ENCODE measurements at regions of chr4 and their contacts with region 1.

Region 1: GRCh38 chr4:77075869-77076799 is at the start of gene CCNI:
- DNase-seq: peak; percentile 94
- H3K4me3 Mint-ChIP-seq: peak within 1 kb of the TSS; percentile 93
- H3K27ac Mint-ChIP-seq: no peak within 1 kb of the TSS
- H3K4me1 Mint-ChIP-seq: peaks cover 26% of the 10 kb centered on the region
- H3K27me3 Mint-ChIP-seq: no peaks in the 10 kb centered on the region
- total RNA-seq, gene CCNI: 259 to 264 TPM

Region 2: DNA sequence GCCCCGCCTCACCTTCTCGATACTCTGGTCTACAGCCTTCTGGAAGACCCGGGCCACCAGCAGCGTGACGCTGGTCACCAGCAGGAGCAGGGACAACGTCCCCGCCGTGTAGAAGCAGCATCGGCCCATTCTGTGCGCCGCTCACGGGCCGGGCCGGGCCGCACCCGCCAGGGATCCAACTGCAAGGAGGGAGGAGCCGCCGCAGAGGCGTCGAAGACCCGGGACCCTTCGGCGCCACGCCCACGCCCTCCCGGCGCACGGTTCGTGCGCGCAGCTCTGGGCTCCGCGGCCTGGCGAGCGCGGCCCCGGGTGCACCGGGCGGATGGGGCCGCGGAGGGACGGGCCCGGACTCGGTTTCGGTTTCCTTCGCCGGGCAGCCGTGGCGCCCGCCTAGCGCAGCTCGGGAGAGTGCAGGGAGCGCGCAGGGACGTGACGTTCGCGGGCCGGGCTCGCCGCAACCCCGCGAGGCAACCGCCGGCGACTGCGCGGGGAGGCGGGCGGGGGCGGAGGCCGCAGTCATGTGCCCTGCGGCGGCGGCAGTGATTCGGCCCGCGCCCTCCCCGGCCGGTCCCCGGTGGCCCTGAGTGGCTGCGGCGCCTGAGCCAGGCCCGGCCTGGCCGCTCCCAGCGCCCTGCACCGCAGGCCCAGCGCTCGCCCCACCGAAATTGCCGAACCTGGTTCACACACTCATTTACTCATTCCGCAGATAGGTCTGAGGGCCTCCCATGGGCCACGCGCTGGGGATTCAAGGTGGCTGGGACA is 862.5 kb before region 1 on chr4 and contains the start of gene SCARB2:
- CTCF ChIA-PET with region 1: no interaction called
- POLR2A ChIA-PET with region 1: no interaction called
- intact Hi-C with region 1: loop called (anchors 5 kb)
- DNase-seq: peak; percentile 75
- H3K4me3 Mint-ChIP-seq: peak within 1 kb of the TSS; percentile 70
- H3K27ac Mint-ChIP-seq: peak within 1 kb of the TSS; percentile 44
- H3K4me1 Mint-ChIP-seq: peaks cover 25% of the 10 kb centered on the region
- H3K27me3 Mint-ChIP-seq: no peaks in the 10 kb centered on the region
- total RNA-seq, gene SCARB2: 7.0 to 8.2 TPM

Region 3: GRCh38 chr4:77025643-77026321 is 50.4 kb before region 1 on chr4:
- CTCF ChIA-PET with region 1: no interaction called
- POLR2A ChIA-PET with region 1: no interaction called
- intact Hi-C with region 1: loop called (anchors 1 kb)
- DNase-seq: no peak
- H3K4me3 Mint-ChIP-seq: no peak overlapping the region
- H3K27ac Mint-ChIP-seq: peak overlapping the region; percentile 62
- H3K4me1 Mint-ChIP-seq: peaks cover 43% of the 10 kb centered on the region
- H3K27me3 Mint-ChIP-seq: no peaks in the 10 kb centered on the region

Region 4: DNA sequence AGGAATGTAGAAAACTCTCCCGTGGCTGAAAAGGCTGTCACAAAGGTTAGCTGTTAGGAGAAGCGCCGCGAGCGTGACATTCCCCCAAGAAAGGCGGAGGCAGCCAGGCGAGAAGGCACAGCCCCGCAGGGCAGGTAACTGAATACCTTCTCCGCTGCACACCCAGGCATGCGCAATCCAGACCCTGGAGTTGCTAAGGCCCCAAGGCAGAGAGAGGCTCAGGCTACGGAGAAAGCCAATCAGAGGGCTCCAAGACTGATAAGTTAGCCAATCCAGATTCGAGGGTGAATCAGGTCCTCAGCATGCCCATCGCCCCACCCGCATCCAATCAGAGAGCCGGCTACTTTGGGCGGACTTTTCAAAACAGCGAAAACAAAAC is 80.4 kb after region 1 on chr4:
- CTCF ChIA-PET with region 1: interaction called, 3 read pairs
- POLR2A ChIA-PET with region 1: interaction called, 4 read pairs
- intact Hi-C with region 1: loop called (anchors 1 kb)
- DNase-seq: peak; percentile 97
- H3K4me3 Mint-ChIP-seq: peak overlapping the region; percentile 95
- H3K27ac Mint-ChIP-seq: peak overlapping the region; percentile 94
- H3K4me1 Mint-ChIP-seq: peaks cover 27% of the 10 kb centered on the region
- H3K27me3 Mint-ChIP-seq: no peaks in the 10 kb centered on the region

Region 5: DNA sequence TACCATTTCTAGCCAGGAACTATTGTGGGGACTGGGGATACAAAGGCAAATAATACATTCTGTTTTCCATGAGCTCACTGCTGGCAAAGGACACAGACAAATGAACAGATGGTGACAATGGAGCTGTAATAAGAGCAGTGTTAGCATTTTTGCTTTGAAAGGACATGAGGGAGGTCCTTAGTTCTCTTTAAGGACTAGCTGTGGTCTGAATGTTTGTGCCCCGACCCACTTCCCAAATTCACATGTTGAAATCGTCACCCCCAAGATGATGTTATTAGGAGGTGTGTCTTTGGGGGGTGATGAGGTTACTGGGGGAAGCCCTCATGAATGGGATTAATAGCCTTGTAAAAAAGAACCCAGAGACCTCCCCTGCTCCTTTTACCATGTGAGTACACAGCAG is 111.2 kb after region 1 on chr4:
- CTCF ChIA-PET with region 1: no interaction called
- POLR2A ChIA-PET with region 1: no interaction called
- intact Hi-C with region 1: no loop called
- DNase-seq: no peak
- H3K4me3 Mint-ChIP-seq: no peak overlapping the region
- H3K27ac Mint-ChIP-seq: no peak overlapping the region
- H3K4me1 Mint-ChIP-seq: no peaks in the 10 kb centered on the region
- H3K27me3 Mint-ChIP-seq: peaks cover 7% of the 10 kb centered on the region

Region 6: DNA sequence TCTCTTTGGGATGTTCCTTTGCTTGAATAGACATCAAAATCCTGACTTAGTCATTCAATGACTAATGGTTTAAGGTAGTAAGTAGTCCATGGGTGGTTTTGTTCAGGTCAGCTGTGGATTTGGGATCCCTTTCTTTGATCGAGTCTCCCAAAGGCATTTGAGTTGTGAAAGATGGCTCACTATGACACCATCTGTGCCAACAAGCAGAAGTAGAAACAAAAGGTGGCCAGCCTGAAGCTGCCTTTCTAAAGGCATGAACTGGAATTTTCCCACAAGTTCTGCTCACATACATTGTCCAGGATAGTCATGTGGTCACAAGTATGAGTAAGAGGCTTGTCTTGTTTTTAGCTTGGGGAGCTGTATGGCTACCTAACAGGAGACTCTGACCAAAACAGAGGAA is 210.8 kb after region 1 on chr4:
- CTCF ChIA-PET with region 1: no interaction called
- POLR2A ChIA-PET with region 1: no interaction called
- intact Hi-C with region 1: no loop called
- DNase-seq: no peak
- H3K4me3 Mint-ChIP-seq: no peak overlapping the region
- H3K27ac Mint-ChIP-seq: no peak overlapping the region
- H3K4me1 Mint-ChIP-seq: no peaks in the 10 kb centered on the region
- H3K27me3 Mint-ChIP-seq: peaks cover 2% of the 10 kb centered on the region

Region 7: GRCh38 chr4:77819843-77820648 is 743.9 kb after region 1 on chr4:
- CTCF ChIA-PET with region 1: no interaction called
- POLR2A ChIA-PET with region 1: interaction called, 3 read pairs
- intact Hi-C with region 1: loop called (anchors 10 kb)
- DNase-seq: peak; percentile 97
- H3K4me3 Mint-ChIP-seq: peak overlapping the region; percentile 97
- H3K27ac Mint-ChIP-seq: peak overlapping the region; percentile 94
- H3K4me1 Mint-ChIP-seq: peaks cover 47% of the 10 kb centered on the region
- H3K27me3 Mint-ChIP-seq: peaks cover 2% of the 10 kb centered on the region

Region 8: GRCh38 chr4:77862478-77863216 is 786.5 kb after region 1 on chr4 and contains the start of gene MRPL1:
- CTCF ChIA-PET with region 1: no interaction called
- POLR2A ChIA-PET with region 1: no interaction called
- intact Hi-C with region 1: loop called (anchors 1 kb)
- DNase-seq: peak; percentile 92
- H3K4me3 Mint-ChIP-seq: peak within 1 kb of the TSS; percentile 86
- H3K27ac Mint-ChIP-seq: peak within 1 kb of the TSS; percentile 99
- H3K4me1 Mint-ChIP-seq: peaks cover 58% of the 10 kb centered on the region
- H3K27me3 Mint-ChIP-seq: peaks cover 4% of the 10 kb centered on the region
- total RNA-seq, gene MRPL1: 46.2 to 51.1 TPM

Measured in activated CD4-positive, alpha-beta memory T cell treated with anti-CD3 and anti-CD28 coated beads for 36 hours (primary cell).